ENCODE measurements at regions of chr20 and their contacts with region 1.

Region 1: GRCh38 chr20:23086056-23086566 is at the start of gene CD93:
- DNase-seq: peak; percentile 83
- H3K4me3 Mint-ChIP-seq: peak within 1 kb of the TSS; percentile 74
- H3K27ac Mint-ChIP-seq: peak within 1 kb of the TSS; percentile 88
- H3K4me1 Mint-ChIP-seq: peaks cover 22% of the 10 kb centered on the region
- H3K27me3 Mint-ChIP-seq: peaks cover 6% of the 10 kb centered on the region
- total RNA-seq, gene CD93: 1.5 and 1.7 TPM in 2 replicates

Region 2: GRCh38 chr20:23147964-23148730 is 62.0 kb after region 1 on chr20:
- intact Hi-C with region 1: loop called (anchors 2 kb)
- DNase-seq: peak; percentile 79
- H3K4me3 Mint-ChIP-seq: peak overlapping the region; percentile 57
- H3K27ac Mint-ChIP-seq: peak overlapping the region; percentile 94
- H3K4me1 Mint-ChIP-seq: peaks cover 63% of the 10 kb centered on the region
- H3K27me3 Mint-ChIP-seq: peaks cover 4% of the 10 kb centered on the region

Measured in activated CD4-positive, alpha-beta T cell treated with anti-CD3 and anti-CD28 coated beads, Interleukin-2, amount 10 ng/mL, durations not matched to agents 24 days and 14 days (primary cell).